ENCODE measurements at regions of chr3 and their contacts with region 1.

Region 1: DNA sequence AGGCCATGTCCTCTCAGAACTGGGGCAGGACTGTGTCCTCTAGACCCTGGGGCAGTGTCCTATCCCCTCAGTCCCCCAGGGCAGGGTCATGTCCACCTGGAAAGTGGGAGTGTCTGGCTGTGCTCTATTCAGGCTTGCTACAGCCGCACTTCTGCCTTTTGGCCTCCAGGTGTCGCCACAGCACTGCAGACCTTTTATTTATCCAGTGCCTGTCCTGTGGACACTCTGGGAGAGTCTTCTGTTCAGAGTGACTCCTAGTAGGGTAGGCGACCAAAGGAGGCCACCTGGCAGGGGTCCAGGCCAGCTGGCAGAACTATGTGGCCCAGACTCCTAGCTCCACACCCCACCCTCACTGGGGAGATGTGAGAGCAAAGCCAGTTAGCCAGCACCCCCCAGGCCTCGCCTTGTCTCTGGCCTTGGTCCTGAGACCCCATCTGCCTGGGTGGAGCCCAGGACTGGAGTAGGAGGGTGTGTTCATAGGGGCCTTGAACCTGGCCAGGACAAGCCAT is 3.9 kb downstream of the TMIE start:
- DNase-seq: peak; percentile 71 to 73
- ATAC-seq: peak; percentile 73 to 91 (median 83)
- H3K4me3 ChIP-seq: no peak overlapping the region
- H3K27ac ChIP-seq: no peak overlapping the region
- H3K4me1 ChIP-seq: peaks cover 11 to 27% (median 17%) of the 10 kb centered on the region in 9 donors
- H3K27me3 ChIP-seq: peaks cover 0 to 37% (median 0%) of the 10 kb centered on the region in 7 donors
- CTCF ChIP-seq: peak; percentile 96 to 99 (median 97)

Region 2: GRCh38 chr3:46833346-46834300 is 128.5 kb after region 1 on chr3:
- intact Hi-C with region 1: no loop called
- DNase-seq: no peak
- ATAC-seq: peak; percentile 8 to 56 (median 21)
- H3K4me3 ChIP-seq: no peak overlapping the region
- H3K27ac ChIP-seq: no peak overlapping the region
- H3K4me1 ChIP-seq: peaks cover 0 to 21% (median 0%) of the 10 kb centered on the region in 9 donors
- H3K27me3 ChIP-seq: no peaks in the 10 kb centered on the region
- CTCF ChIP-seq: no peak

Region 3: DNA sequence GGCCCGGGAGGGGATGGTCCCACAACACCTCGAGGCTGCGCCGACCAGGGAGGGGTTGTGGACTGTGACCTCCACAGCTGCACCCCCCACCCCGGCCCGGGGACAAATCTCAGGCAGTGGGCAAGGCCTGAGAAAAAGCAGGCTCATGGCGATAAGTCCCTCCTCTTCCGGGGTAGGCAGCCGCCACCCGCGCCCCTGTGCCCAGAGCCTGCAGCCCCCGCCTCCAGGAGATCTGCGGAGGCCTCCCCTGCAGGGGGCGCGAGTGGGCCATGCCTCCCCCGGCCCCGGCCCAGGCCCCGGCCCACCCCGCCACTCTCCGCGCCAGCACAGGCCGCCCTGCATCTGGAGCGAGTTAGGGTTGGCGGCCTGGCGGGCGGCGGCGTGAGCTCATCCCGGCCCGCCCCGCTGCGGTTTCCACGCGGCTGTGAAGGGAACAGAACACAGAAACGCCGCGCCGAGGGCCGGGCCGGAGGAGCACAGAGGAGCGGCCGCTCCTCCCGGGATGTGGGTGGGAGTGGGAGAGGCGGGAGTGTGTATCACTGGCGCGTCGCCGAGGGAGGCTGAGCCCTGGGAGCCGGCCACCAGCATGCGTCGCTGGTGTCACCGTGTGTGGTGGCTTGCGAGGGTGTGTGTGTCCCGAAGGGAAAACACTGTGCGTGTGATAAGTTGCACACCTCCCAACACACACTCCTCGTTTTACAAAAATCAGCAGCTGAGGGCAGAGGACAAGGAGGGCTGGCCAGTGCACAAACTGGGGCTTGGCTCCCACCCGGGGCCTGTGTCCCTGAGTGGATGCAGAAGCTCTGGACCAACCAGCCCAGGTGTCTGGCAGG is 140.9 kb after region 1 on chr3:
- intact Hi-C with region 1: loop called in 3 of 10 experiments (anchors 5 kb)
- DNase-seq: peak; percentile 68 to 82
- ATAC-seq: peak; percentile 39 to 71 (median 58)
- H3K4me3 ChIP-seq: peak overlapping the region; percentile 29 to 60 (median 52)
- H3K27ac ChIP-seq: peak overlapping the region; percentile 51 to 79 (median 68)
- H3K4me1 ChIP-seq: peaks cover 10 to 50% (median 28%) of the 10 kb centered on the region in 9 donors
- H3K27me3 ChIP-seq: peaks cover 0 to 7% (median 0%) of the 10 kb centered on the region in 7 donors
- CTCF ChIP-seq: peak in 8 of 9 donors; percentile 32 to 72 (median 65)

Region 4: GRCh38 chr3:46895204-46895660 is 190.2 kb after region 1 on chr3:
- intact Hi-C with region 1: loop called in 4 of 10 experiments (anchors 1 to 5 kb)
- DNase-seq: peak; percentile 75 to 85
- ATAC-seq: peak in 7 of 8 donors; percentile 45 to 73 (median 52)
- H3K4me3 ChIP-seq: no peak overlapping the region
- H3K27ac ChIP-seq: no peak overlapping the region
- H3K4me1 ChIP-seq: peaks cover 11 to 63% (median 41%) of the 10 kb centered on the region in 9 donors
- H3K27me3 ChIP-seq: peaks cover 0 to 56% (median 11%) of the 10 kb centered on the region in 7 donors
- CTCF ChIP-seq: peak; percentile 85 to 94 (median 89)

Region 5: DNA sequence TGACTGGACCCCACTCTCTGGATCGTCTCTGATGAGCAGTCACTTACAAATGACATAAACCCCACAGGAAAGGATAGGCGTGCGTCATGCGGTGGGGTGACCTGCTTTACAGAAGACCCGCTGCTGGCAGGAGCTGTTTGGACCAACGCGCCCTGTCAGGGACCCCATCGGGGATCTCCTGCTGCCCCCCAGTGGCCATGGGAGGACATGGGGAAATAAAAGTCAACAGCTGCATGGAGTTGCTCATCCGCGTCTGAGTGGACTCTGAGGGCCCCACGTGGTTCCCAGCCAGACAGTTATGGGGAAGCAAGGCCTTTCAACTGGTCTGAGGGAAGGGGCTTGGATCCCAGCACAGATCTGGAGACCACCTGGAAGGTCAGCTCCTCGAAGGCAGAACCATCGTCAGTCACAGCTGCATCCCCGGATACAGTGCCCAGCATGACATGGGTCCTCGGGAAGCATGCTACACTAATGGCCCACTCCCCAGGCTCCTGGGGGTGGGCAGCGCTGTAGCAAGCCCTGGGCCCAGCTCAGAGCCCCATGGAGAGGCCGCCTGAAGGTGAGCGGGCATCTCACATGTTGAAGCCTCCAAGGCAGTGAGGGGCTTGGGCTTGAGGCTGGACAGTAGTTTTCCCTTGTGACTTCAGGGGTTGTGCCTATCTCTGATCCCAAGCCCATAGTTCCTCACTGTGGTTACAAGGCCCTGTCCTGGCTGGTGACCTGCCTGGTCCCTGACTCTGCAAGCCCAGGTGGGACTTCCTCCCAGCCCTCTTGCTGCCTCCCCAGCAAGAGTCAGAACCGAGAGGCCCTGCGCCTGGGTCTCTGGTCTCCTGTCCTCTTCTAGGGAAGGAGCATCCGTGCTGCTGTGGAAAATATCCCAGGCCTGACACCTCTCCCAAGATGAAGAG is 204.7 kb after region 1 on chr3:
- intact Hi-C with region 1: loop called in 9 of 10 experiments (anchors 1 to 5 kb)
- DNase-seq: peak; percentile 84 to 89
- ATAC-seq: peak; percentile 75 to 88 (median 82)
- H3K4me3 ChIP-seq: peak overlapping the region in 1 of 10 donors; percentile 19
- H3K27ac ChIP-seq: no peak overlapping the region
- H3K4me1 ChIP-seq: peaks cover 9 to 36% (median 24%) of the 10 kb centered on the region in 9 donors
- H3K27me3 ChIP-seq: no peaks in the 10 kb centered on the region
- CTCF ChIP-seq: peak; percentile 67 to 93 (median 88)

Region 6: GRCh38 chr3:46998121-46998851 is 293.2 kb after region 1 on chr3:
- intact Hi-C with region 1: loop called in 6 of 10 experiments (anchors 10 kb)
- DNase-seq: peak; percentile 65 to 78
- ATAC-seq: peak; percentile 63 to 87 (median 74)
- H3K4me3 ChIP-seq: no peak overlapping the region
- H3K27ac ChIP-seq: no peak overlapping the region
- H3K4me1 ChIP-seq: peaks cover 0 to 14% (median 0%) of the 10 kb centered on the region in 9 donors
- H3K27me3 ChIP-seq: no peaks in the 10 kb centered on the region
- CTCF ChIP-seq: peak; percentile 74 to 89 (median 83)

Region 7: GRCh38 chr3:47009225-47010110 is 304.4 kb after region 1 on chr3:
- intact Hi-C with region 1: loop called in 2 of 10 experiments (anchors 10 kb)
- DNase-seq: peak; percentile 89 to 93
- ATAC-seq: peak; percentile 92 to 97 (median 96)
- H3K4me3 ChIP-seq: peak overlapping the region; percentile 38 to 83 (median 70)
- H3K27ac ChIP-seq: peak overlapping the region; percentile 81 to 95 (median 88)
- H3K4me1 ChIP-seq: peaks cover 5 to 20% (median 13%) of the 10 kb centered on the region in 9 donors
- H3K27me3 ChIP-seq: no peaks in the 10 kb centered on the region
- CTCF ChIP-seq: no peak

Measured in heart right ventricle (tissue), 16 donors.